Naive thymus-derived CD4-positive, alpha-beta T cell (primary cell): ENCODE measurements at regions of chrX and their contacts with region 1.

Region 1: GRCh38 chrX:151082076-151082948 is 94.1 kb upstream of the GPR50 start:
- DNase-seq: peak; percentile 19 to 62 (median 45)
- ATAC-seq: peak; percentile 91
- H3K4me3 ChIP-seq: no peak overlapping the region
- H3K4me3 Mint-ChIP-seq: peak overlapping the region in 7 of 10 donors; percentile 12 to 61 (median 49)
- H3K27ac ChIP-seq: no peak overlapping the region
- H3K27ac Mint-ChIP-seq: no peak overlapping the region
- H3K4me1 ChIP-seq: no peaks in the 10 kb centered on the region
- H3K4me1 Mint-ChIP-seq: peaks cover 0 to 7% (median 0%) of the 10 kb centered on the region in 7 donors
- H3K27me3 ChIP-seq: no peaks in the 10 kb centered on the region
- H3K27me3 Mint-ChIP-seq: peaks cover 5 to 25% (median 14%) of the 10 kb centered on the region in 5 donors

Region 2: GRCh38 chrX:150715184-150715583 is 367.1 kb before region 1 on chrX:
- CTCF ChIA-PET with region 1: no interaction called
- POLR2A ChIA-PET with region 1: no interaction called
- intact Hi-C with region 1: no loop called
- DNase-seq: no peak
- ATAC-seq: no peak
- H3K4me3 ChIP-seq: no peak overlapping the region
- H3K4me3 Mint-ChIP-seq: no peak overlapping the region
- H3K27ac ChIP-seq: no peak overlapping the region
- H3K27ac Mint-ChIP-seq: peak overlapping the region in 8 of 9 donors; percentile 6 to 80 (median 67)
- H3K4me1 ChIP-seq: peaks cover 0 to 8% of the 10 kb centered on the region in 2 donors
- H3K4me1 Mint-ChIP-seq: peaks cover 16 to 60% (median 28%) of the 10 kb centered on the region in 7 donors
- H3K27me3 ChIP-seq: no peaks in the 10 kb centered on the region
- H3K27me3 Mint-ChIP-seq: no peaks in the 10 kb centered on the region

Region 3: DNA sequence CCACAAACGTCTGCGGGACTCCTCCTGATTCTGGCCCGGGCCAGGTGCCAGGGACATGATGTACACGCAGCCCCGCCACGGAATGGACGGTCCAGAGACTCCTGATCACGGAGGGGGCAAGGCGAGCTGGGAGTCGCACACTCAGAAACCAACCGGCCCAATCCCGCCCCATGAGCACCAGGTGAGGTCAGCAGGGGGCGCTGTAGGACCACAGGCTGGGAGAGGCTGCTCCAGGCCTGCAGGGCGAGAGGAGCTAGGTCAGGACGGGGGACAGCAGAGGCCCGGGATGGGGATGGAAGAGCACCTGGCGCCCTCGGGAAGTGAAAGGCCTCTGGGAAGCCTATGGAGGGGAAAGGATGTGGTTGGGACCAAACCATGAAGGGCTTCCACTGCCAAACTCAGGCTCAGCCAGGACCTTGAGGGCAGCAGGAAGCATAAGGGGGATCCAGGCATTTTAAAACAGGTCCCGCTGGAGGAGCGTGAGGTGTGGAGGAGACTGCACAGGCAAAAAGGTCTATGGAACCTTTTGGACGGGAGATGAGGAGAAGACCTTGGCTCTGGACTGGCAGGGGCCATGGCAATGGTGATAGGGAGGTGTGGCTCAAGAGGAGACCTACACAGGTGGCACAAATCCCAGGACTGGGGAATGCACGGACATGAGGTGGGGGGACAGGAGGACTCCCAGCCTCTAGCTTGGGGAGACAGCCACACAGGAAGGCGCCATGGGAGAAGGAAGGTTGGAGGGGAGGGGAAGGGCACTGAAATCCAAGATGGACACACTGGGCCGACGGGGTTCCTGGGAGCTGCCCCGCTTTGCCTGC is 310.0 kb before region 1 on chrX:
- CTCF ChIA-PET with region 1: interaction called, 41 read pairs
- POLR2A ChIA-PET with region 1: interaction called, 3 read pairs
- intact Hi-C with region 1: loop called in 1 of 2 experiments (anchors 1 kb)
- DNase-seq: peak; percentile 34 to 80 (median 61)
- ATAC-seq: peak; percentile 86
- H3K4me3 ChIP-seq: no peak overlapping the region
- H3K4me3 Mint-ChIP-seq: no peak overlapping the region
- H3K27ac ChIP-seq: no peak overlapping the region
- H3K27ac Mint-ChIP-seq: peak overlapping the region in 1 of 9 donors; percentile 62
- H3K4me1 ChIP-seq: no peaks in the 10 kb centered on the region
- H3K4me1 Mint-ChIP-seq: peaks cover 0 to 3% (median 0%) of the 10 kb centered on the region in 7 donors
- H3K27me3 ChIP-seq: no peaks in the 10 kb centered on the region
- H3K27me3 Mint-ChIP-seq: no peaks in the 10 kb centered on the region

Region 4: DNA sequence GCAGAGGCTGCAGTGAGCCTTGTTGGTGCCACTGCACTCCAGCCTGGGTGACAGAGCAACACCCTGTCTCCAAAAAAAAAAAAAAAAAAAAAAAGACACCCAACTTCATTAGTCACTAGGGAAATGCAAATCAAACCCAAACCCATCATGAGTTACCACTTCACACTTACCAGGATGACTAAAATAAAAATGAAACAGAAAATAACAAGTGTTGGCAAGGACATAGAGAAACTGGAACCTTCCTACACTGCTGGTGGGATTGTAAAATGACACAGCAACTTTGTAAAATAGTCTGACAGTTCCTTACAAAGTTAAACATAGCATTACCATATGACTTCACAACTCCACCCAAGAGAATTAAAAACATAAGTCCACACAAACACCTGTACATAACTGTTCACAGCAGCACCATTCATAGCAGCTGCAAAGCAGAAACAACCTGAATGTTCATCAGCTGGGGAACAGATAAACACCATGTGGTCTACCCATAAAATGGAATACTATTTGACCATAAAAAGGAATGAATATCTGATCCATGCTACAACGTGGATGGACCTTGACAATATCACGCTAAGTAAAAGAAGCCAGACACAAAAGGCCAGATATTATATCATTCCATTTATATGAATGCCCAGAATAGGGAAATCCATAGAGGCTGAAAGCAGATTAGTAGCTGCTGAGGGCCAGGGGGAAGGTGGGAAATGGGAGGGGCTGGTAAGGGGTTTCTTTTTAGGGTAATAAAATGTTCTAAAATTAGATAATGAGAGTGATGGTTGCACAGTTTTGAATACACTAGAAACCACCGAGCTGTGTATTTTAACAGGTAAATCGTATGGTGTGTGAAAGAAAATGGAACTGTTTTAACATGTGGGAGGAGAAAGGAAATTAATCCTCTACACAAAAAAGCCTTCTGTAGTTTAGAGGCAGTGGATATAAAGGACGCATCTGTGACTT is 202.2 kb before region 1 on chrX:
- CTCF ChIA-PET with region 1: no interaction called
- POLR2A ChIA-PET with region 1: no interaction called
- intact Hi-C with region 1: loop called in 1 of 2 experiments (anchors 5 kb)
- DNase-seq: no peak
- ATAC-seq: peak; percentile 32
- H3K4me3 ChIP-seq: no peak overlapping the region
- H3K4me3 Mint-ChIP-seq: peak overlapping the region in 4 of 10 donors; percentile 26 to 47 (median 32)
- H3K27ac ChIP-seq: no peak overlapping the region
- H3K27ac Mint-ChIP-seq: peak overlapping the region in 7 of 9 donors; percentile 4 to 87 (median 53)
- H3K4me1 ChIP-seq: peaks cover 0 to 5% of the 10 kb centered on the region in 2 donors
- H3K4me1 Mint-ChIP-seq: peaks cover 11 to 45% (median 27%) of the 10 kb centered on the region in 7 donors
- H3K27me3 ChIP-seq: no peaks in the 10 kb centered on the region
- H3K27me3 Mint-ChIP-seq: no peaks in the 10 kb centered on the region

Region 5: DNA sequence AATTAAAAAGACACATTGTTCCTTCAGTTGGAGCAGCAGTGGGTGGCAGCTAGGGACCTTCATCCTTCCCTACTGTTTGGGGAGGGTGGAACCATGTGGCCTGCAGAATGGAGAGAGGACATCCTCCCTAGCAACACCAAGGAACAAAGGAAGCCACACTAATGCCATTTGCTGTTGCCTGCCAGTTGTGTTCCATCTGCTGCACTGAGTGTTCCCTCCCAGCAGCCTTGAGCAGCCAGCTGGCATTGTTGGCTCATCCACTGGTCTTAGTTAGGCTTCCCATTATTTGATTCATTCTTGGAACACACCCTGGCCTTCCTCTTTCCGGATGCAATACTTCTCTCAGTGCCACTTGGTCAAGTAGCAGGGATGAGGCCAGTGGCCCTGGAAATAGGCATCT is 124.1 kb before region 1 on chrX:
- CTCF ChIA-PET with region 1: no interaction called
- POLR2A ChIA-PET with region 1: no interaction called
- intact Hi-C with region 1: no loop called
- DNase-seq: no peak
- ATAC-seq: no peak
- H3K4me3 ChIP-seq: no peak overlapping the region
- H3K4me3 Mint-ChIP-seq: no peak overlapping the region
- H3K27ac ChIP-seq: no peak overlapping the region
- H3K27ac Mint-ChIP-seq: no peak overlapping the region
- H3K4me1 ChIP-seq: no peaks in the 10 kb centered on the region
- H3K4me1 Mint-ChIP-seq: no peaks in the 10 kb centered on the region
- H3K27me3 ChIP-seq: no peaks in the 10 kb centered on the region
- H3K27me3 Mint-ChIP-seq: peaks cover 0 to 5% (median 0%) of the 10 kb centered on the region in 5 donors